Activated CD4-positive, alpha-beta memory T cell treated with anti-CD3 and anti-CD28 coated beads for 36 hours (primary cell): ENCODE measurements at regions of chr11 and their contacts with region 1.

Region 1: GRCh38 chr11:4551346-4551979 is 6.5 kb downstream of the OR52M1 start:
- DNase-seq: no peak
- H3K4me3 Mint-ChIP-seq: no peak overlapping the region
- H3K27ac Mint-ChIP-seq: no peak overlapping the region
- H3K4me1 Mint-ChIP-seq: no peaks in the 10 kb centered on the region
- H3K27me3 Mint-ChIP-seq: peaks cover 7% of the 10 kb centered on the region

Region 2: DNA sequence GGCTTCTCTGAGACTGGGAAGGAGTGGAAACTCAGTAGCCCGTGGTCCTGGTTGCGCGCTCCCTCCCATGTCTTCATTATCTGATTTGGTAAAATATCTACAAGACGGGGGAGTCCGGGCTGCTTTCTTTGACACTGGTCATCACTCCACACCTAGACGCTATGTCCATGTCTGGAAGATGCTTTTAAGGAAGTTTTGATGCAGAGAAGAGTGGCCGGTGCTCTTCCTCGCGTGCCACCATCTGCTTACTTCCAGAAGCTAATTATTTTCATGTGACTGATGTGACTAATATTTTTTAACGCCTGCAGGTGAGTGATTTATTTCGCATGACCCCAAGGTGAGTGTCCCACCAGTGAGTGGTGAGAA is 157.6 kb before region 1 on chr11:
- CTCF ChIA-PET with region 1: no interaction called
- POLR2A ChIA-PET with region 1: no interaction called
- intact Hi-C with region 1: no loop called
- DNase-seq: no peak
- H3K4me3 Mint-ChIP-seq: peak overlapping the region; percentile 90
- H3K27ac Mint-ChIP-seq: peak overlapping the region; percentile 91
- H3K4me1 Mint-ChIP-seq: peaks cover 32% of the 10 kb centered on the region
- H3K27me3 Mint-ChIP-seq: peaks cover 13% of the 10 kb centered on the region

Region 3: DNA sequence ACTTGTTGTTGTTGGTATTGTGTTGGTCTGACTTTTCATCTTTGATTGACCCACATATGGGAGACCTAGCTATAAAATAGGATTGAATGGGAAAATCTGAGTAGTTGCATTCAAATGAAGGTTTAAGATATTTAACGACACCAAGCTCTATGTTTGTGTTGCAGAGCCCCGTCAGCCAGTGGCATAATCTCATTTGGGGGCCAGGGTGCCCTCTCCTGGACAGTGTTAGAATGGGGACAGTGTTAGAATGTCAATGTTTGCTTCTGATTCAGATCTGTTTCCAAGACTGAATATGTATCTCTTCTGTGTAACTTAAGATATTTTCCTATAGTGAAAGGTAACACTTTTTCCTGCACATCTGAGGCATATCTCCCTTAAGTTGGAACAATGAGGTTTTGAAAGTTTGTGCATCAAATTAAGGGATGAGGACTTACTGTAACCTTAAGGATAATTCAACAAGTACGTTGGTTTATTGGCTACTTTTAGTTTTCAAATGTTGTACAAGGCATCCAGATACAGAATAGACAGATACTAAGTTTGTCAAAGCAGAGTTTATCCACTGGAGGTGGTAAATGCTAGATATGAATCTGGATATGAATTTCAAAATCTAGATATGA is 11.8 kb before region 1 on chr11:
- CTCF ChIA-PET with region 1: interaction called, 10 read pairs
- POLR2A ChIA-PET with region 1: no interaction called
- intact Hi-C with region 1: no loop called
- DNase-seq: peak; percentile 70
- H3K4me3 Mint-ChIP-seq: no peak overlapping the region
- H3K27ac Mint-ChIP-seq: no peak overlapping the region
- H3K4me1 Mint-ChIP-seq: no peaks in the 10 kb centered on the region
- H3K27me3 Mint-ChIP-seq: no peaks in the 10 kb centered on the region